ENCODE measurements at regions of chr3 and their contacts with region 1.

Region 1: DNA sequence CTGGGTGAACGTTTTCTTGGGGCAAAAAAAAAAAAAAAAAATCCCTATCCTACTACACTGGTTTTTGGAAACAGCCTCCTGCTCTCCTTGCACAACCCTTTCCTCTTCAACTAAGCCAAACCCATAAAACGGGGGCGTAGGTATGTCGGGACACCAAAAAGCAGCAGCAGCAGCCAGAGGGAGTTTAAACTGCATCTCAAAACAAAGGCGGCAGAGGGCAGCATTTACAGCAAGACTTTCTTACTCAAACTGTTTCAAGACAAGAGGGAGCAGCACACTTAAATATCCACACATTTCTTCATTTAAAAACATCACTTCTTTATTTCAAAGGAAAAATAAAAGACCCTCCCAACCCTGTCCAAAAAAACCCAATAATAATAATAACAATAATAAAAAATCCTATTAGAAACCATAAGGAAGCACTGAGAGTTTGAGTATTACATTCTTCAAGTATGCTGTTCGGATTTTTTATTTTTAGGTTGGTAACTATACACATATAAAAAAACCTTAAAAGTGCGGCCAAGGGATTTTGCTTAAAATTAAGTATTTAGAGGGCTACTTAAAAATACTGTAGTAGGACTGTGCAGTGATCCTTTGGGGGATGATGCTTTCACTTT is 43.9 kb upstream of the PLXND1 start:
- DNase-seq: peak in 3 of 5 donors; percentile 77 to 85 (median 80)
- H3K4me3 ChIP-seq: no peak overlapping the region
- H3K27ac ChIP-seq: no peak overlapping the region
- H3K4me1 ChIP-seq: peaks cover 0 to 3% (median 0%) of the 10 kb centered on the region in 3 donors
- H3K27me3 ChIP-seq: no peaks in the 10 kb centered on the region
- CTCF ChIP-seq: peak; percentile 82

Region 2: DNA sequence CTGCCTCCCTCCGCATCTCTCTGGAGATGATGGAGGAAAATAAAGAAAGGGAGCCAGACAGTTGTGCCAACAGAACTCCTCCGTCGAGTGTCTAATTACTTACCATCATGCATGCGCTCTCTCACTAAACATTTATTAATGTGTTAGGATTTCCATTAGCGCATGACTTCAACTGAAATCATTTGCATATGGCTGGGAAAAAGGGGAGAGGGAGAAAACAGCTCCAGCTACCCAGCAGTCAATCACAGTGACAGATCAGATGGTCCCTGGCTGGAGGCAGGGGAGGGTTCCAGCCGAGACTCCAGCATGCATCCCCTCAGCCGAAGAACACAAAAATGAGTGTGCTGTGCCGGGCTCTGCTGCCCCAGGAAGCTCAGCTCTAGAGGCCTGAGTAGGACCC is 128.8 kb before region 1 on chr3:
- intact Hi-C with region 1: no loop called
- DNase-seq: peak in 3 of 5 donors; percentile 37 to 60 (median 42)
- H3K4me3 ChIP-seq: no peak overlapping the region
- H3K27ac ChIP-seq: no peak overlapping the region
- H3K4me1 ChIP-seq: no peaks in the 10 kb centered on the region
- H3K27me3 ChIP-seq: no peaks in the 10 kb centered on the region
- CTCF ChIP-seq: no peak

Region 3: DNA sequence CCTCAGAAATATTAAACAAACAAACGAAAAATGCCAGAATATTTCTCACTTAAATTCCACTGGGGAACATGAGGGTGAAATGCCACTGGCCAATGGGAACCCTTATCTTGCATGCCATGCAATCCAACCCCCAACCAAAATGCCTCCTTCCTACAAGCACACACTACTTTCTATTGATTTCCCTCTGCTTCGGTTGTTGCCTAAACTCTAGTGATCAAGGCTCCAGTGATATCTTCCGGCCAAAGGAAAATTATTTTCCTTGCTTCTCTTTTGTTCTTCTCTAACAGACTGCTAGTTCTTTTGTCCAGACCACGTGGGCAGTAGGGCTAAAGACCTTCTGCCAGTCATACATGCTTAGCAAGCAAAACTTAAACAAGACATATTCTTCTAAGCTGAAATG is 127.4 kb after region 1 on chr3:
- intact Hi-C with region 1: no loop called
- DNase-seq: no peak
- H3K4me3 ChIP-seq: no peak overlapping the region
- H3K27ac ChIP-seq: no peak overlapping the region
- H3K4me1 ChIP-seq: no peaks in the 10 kb centered on the region
- H3K27me3 ChIP-seq: no peaks in the 10 kb centered on the region
- CTCF ChIP-seq: no peak

Region 4: GRCh38 chr3:129801354-129801753 is 151.0 kb after region 1 on chr3:
- intact Hi-C with region 1: no loop called
- DNase-seq: no peak
- H3K4me3 ChIP-seq: no peak overlapping the region
- H3K27ac ChIP-seq: no peak overlapping the region
- H3K4me1 ChIP-seq: no peaks in the 10 kb centered on the region
- H3K27me3 ChIP-seq: no peaks in the 10 kb centered on the region
- CTCF ChIP-seq: no peak

Region 5: GRCh38 chr3:129824926-129825541 is 174.7 kb after region 1 on chr3:
- intact Hi-C with region 1: loop called (anchors 10 kb)
- DNase-seq: peak in 3 of 5 donors; percentile 36 to 80 (median 64)
- H3K4me3 ChIP-seq: no peak overlapping the region
- H3K27ac ChIP-seq: no peak overlapping the region
- H3K4me1 ChIP-seq: peaks cover 0 to 4% (median 2%) of the 10 kb centered on the region in 3 donors
- H3K27me3 ChIP-seq: no peaks in the 10 kb centered on the region
- CTCF ChIP-seq: peak; percentile 71

Measured in kidney (tissue), 22 donors.